ENCODE measurements at regions of chr7 and their contacts with region 1.

Region 1: DNA sequence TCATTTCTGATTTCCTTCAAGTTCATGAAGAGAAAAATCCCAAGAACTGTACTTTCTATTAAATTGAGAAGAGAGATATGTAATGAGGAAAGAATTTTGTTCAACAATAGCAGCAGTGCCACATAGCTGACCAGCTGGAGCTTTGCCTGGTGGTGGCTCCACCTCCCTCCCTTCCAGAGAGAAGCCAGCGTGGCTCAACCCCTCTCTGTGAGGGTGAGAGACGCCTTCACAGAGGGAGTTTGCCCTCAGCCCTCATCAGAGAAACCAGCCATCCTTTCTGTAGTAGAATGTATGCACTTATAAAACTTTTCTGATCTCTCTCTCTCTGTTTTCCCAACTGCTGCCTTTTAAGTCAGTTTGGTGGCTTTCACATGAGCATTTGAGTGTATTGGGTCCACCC is 20.5 kb upstream of the COL1A2 start:
- DNase-seq: peak; percentile 79
- H3K4me3 ChIP-seq: no peak overlapping the region
- H3K27ac ChIP-seq: peak overlapping the region; percentile 98
- H3K4me1 ChIP-seq: peaks cover 44% of the 10 kb centered on the region
- H3K27me3 ChIP-seq: no peaks in the 10 kb centered on the region
- CTCF ChIP-seq: no peak

Region 2: DNA sequence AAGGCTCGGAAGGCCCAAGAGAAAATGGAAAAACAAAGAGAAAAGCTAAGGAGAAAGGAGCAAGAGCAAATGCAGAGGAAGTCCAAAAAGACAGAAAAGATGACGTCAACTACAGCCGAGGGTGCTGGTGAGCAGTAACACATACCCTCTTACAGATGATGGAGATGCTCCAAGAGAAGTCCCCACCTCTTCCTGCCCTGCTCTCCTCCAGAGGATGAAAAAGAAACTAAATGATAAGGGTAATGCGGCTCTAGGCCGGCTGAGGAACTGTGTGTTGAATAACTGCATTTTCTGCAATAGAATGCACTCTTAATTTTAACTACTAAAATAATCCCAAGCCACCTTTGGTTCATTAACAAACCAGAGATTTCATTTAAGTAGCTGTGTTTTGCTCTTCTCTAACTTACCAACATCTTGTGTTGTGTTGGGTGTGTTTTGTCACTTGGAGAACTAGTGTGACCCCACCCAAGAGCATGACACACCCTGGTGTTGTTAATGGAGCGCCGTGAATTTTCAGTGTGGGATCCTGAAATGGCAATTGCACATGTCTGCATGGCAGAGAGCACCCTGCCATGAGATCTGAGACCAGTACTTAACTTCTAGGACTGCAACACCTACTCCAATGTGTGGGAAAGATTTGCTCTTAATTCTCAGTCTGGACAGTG is 916.1 kb after region 1 on chr7:
- CTCF ChIA-PET with region 1: no interaction called
- POLR2A ChIA-PET with region 1: interaction called, 17 read pairs
- intact Hi-C with region 1: no loop called
- DNase-seq: no peak
- H3K4me3 ChIP-seq: no peak overlapping the region
- H3K27ac ChIP-seq: no peak overlapping the region
- H3K4me1 ChIP-seq: no peaks in the 10 kb centered on the region
- H3K27me3 ChIP-seq: no peaks in the 10 kb centered on the region
- CTCF ChIP-seq: no peak

Measured in A673 (cell line).